Activated naive CD4-positive, alpha-beta T cell treated with anti-CD3 and anti-CD28 coated beads, Interleukin-2, amount 10 ng/mL, durations not matched to agents 7 days and 5 days (primary cell): ENCODE measurements at regions of chr2 and their contacts with region 1.

Region 1: GRCh38 chr2:7427293-7428060 is 510.3 kb downstream of the RNF144A start:
- DNase-seq: peak; percentile 28
- H3K4me3 Mint-ChIP-seq: no peak overlapping the region
- H3K27ac Mint-ChIP-seq: no peak overlapping the region
- H3K4me1 Mint-ChIP-seq: peaks cover 42% of the 10 kb centered on the region
- H3K27me3 Mint-ChIP-seq: peaks cover 25% of the 10 kb centered on the region

Region 2: GRCh38 chr2:7473135-7473771 is 45.8 kb after region 1 on chr2:
- CTCF ChIA-PET with region 1: no interaction called
- DNase-seq: no peak
- H3K4me3 Mint-ChIP-seq: no peak overlapping the region
- H3K27ac Mint-ChIP-seq: no peak overlapping the region
- H3K4me1 Mint-ChIP-seq: peaks cover 24% of the 10 kb centered on the region
- H3K27me3 Mint-ChIP-seq: no peaks in the 10 kb centered on the region

Region 3: GRCh38 chr2:7567646-7568045 is 140.2 kb after region 1 on chr2:
- CTCF ChIA-PET with region 1: interaction called, 10 read pairs
- DNase-seq: peak; percentile 74
- H3K4me3 Mint-ChIP-seq: peak overlapping the region; percentile 35
- H3K27ac Mint-ChIP-seq: peak overlapping the region; percentile 89
- H3K4me1 Mint-ChIP-seq: peaks cover 54% of the 10 kb centered on the region
- H3K27me3 Mint-ChIP-seq: no peaks in the 10 kb centered on the region

Region 4: DNA sequence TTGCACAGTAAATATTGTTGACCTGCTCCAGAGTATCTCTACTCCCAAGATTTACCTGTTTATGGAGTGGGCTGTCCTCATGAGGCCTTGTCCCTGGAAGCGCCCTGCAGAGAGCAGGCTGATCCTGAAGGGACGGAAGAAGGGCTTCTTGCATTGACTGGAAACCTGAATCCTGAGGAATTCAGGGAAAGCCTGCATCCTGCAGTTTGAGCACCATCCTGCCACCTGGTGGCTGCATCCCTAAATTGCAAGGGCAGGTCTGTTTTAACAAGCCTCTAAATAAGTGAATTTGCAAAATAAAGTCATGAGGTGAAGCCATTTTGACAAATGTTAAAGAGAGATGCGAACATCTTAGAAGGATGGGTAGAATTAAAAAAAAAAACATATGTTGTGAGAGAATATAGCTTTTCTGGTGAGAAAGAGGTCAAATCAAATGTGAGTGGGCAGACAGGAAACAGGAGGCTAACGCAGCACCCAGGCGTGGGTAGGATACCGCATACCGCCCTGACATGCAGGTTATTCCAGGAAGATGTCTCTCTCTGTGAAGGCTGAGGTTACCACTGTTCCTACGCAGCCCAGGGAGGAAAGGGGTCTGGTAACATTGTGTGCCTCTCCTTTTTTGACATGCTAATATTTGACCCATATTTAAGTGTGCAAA is 244.7 kb after region 1 on chr2:
- CTCF ChIA-PET with region 1: interaction called, 32 read pairs
- DNase-seq: peak; percentile 69
- H3K4me3 Mint-ChIP-seq: peak overlapping the region; percentile 50
- H3K27ac Mint-ChIP-seq: peak overlapping the region; percentile 90
- H3K4me1 Mint-ChIP-seq: peaks cover 26% of the 10 kb centered on the region
- H3K27me3 Mint-ChIP-seq: peaks cover 4% of the 10 kb centered on the region

Region 5: DNA sequence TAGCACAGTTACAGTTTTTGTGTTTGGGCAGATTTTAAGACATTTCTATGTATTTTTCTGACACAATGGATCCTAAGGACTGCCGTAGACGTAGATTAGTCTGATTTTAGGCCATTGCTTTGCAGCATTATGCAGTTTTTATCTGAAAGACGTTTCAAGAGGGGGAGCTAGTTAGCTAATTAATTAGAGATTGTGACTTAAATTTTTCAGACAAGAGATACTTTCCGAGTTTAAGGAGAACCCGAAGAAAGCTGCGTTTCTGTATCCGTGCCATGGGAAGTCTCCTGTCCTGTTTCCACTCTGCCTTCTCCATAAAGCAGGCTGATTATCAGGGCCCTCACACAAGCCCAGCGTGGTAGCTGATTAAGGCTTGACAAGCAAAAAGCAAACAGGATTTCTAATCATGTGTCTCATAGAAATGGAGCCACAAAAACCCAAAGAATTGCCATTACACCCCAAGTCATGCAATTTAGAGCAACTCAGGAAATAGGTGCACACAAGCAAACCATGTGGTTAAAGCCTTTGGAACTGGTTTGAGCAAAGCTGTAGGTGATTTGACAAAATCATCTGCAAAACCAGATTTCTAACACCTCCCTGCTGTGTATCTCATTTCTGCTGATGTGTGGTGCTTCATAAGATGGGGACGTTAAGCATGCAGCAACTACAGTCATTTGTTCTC is 297.8 kb after region 1 on chr2:
- CTCF ChIA-PET with region 1: interaction called, 12 read pairs
- DNase-seq: peak; percentile 34
- H3K4me3 Mint-ChIP-seq: peak overlapping the region; percentile 66
- H3K27ac Mint-ChIP-seq: peak overlapping the region; percentile 90
- H3K4me1 Mint-ChIP-seq: peaks cover 38% of the 10 kb centered on the region
- H3K27me3 Mint-ChIP-seq: no peaks in the 10 kb centered on the region